ENCODE measurements at regions of chr14 and their contacts with region 1.

Region 1: GRCh38 chr14:75185661-75186060 is 9.2 kb upstream of the TMED10 start:
- DNase-seq: no peak
- ATAC-seq: no peak
- H3K4me3 ChIP-seq: no peak overlapping the region
- H3K27ac ChIP-seq: no peak overlapping the region
- H3K4me1 ChIP-seq: no peaks in the 10 kb centered on the region
- H3K27me3 ChIP-seq: no peaks in the 10 kb centered on the region
- CTCF ChIP-seq: no peak

Region 2: GRCh38 chr14:75427482-75428229 is 242.0 kb after region 1 on chr14 and contains the start of gene JDP2:
- CTCF ChIA-PET with region 1: interaction called, 3 read pairs
- POLR2A ChIA-PET with region 1: interaction called, 14 read pairs
- in situ Hi-C with region 1: no loop called
- intact Hi-C with region 1: no loop called
- DNase-seq: no peak
- ATAC-seq: peak; percentile 85
- H3K4me3 ChIP-seq: peak within 1 kb of the TSS; percentile 56 to 57
- H3K27ac ChIP-seq: peak within 1 kb of the TSS; percentile 63
- H3K4me1 ChIP-seq: peaks cover 21% of the 10 kb centered on the region
- H3K27me3 ChIP-seq: no peaks in the 10 kb centered on the region
- CTCF ChIP-seq: no peak
- total RNA-seq, gene JDP2: 17.5 TPM

Measured in Panc1 (cell line).